Astrocyte of the cerebellum (primary cell): ENCODE measurements at regions of chr16 and their contacts with region 1.

Region 1: GRCh38 chr16:3045357-3045728 is 1.0 kb upstream of the MMP25 start:
- DNase-seq: no peak
- H3K4me3 ChIP-seq: peak overlapping the region; percentile 39
- CTCF ChIP-seq: no peak

Region 2: DNA sequence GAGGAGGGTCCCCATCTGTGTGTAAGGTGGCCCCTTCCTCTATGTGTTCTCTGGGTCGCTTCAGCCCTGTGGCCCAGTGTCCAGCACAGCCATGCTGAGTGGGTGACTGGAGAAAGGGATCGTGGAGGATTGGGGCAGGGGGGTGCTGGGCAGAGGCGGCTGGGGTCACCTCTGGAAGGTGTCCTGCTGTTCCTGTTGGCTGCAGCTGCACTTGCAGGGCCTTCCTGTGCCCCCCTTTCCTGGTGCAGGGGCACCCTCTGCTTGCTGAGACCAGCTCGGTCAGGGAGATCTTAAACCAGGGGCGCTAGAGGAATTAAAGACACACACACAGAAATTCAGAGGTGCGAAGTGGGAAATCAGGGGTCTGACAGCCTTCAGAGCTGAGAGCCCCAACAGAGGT is 31.2 kb after region 1 on chr16:
- in situ Hi-C with region 1: no loop called
- DNase-seq: no peak
- H3K4me3 ChIP-seq: no peak overlapping the region
- CTCF ChIP-seq: no peak

Region 3: GRCh38 chr16:3129137-3130131 is 84.1 kb after region 1 on chr16:
- in situ Hi-C with region 1: loop called (anchors 5 kb)
- DNase-seq: peak; percentile 76
- H3K4me3 ChIP-seq: peak overlapping the region; percentile 5
- CTCF ChIP-seq: peak; percentile 92